ENCODE measurements at regions of chr4 and their contacts with region 1.

Region 1: GRCh38 chr4:123350191-123350544 is 46.4 kb upstream of the SPRY1 start:
- DNase-seq: peak in 1 of 2 experiments; percentile 40
- H3K4me3 ChIP-seq: no peak overlapping the region
- H3K27ac ChIP-seq: no peak overlapping the region
- H3K4me1 ChIP-seq: no peaks in the 10 kb centered on the region
- H3K27me3 ChIP-seq: no peaks in the 10 kb centered on the region
- CTCF ChIP-seq: peak; percentile 44; the same call in 1 of the 2 replicates

Region 2: DNA sequence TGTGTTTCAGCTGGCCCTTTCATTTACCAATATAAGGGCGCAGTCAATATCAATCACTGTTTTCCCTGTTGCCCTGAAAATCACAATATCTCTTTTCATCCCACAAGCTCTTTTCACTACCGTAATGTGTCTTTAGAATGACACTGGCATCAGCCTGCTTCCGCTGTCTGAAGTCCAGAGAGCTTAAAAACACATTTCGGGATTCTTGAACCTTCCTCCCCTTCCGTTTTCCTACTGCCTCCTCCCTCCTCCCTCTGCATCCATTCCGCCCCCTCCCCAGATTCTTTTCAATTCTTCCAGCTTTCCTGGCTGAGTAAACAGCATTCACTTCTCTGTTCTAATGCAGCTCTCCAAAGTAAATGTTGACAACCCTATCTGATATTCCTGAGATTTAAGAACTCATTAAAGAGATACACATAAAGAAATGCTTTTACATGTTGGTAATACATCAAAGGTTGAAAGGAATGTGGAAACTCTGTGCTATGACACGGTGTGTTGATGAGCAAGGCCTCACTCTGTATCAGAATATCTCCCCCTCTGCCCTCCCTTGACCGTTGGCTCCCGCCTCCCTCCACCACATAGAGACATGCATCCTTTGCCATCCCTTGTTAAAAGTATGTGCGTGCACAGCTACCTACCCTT is 37.1 kb before region 1 on chr4:
- CTCF ChIA-PET with region 1: no interaction called
- POLR2A ChIA-PET with region 1: no interaction called
- intact Hi-C with region 1: no loop called
- DNase-seq: no peak
- H3K4me3 ChIP-seq: no peak overlapping the region
- H3K27ac ChIP-seq: no peak overlapping the region
- H3K4me1 ChIP-seq: peaks cover 13% of the 10 kb centered on the region; the same call in 1 of the 2 replicates
- H3K27me3 ChIP-seq: no peaks in the 10 kb centered on the region
- CTCF ChIP-seq: no peak

Region 3: GRCh38 chr4:124132161-124132560 is 782.0 kb after region 1 on chr4:
- CTCF ChIA-PET with region 1: interaction called, 12 read pairs
- POLR2A ChIA-PET with region 1: no interaction called
- intact Hi-C with region 1: no loop called
- DNase-seq: no peak
- H3K4me3 ChIP-seq: no peak overlapping the region
- H3K27ac ChIP-seq: no peak overlapping the region
- H3K4me1 ChIP-seq: no peaks in the 10 kb centered on the region
- H3K27me3 ChIP-seq: no peaks in the 10 kb centered on the region
- CTCF ChIP-seq: no peak

Region 4: GRCh38 chr4:124722071-124722470 is 1371.9 kb after region 1 on chr4:
- CTCF ChIA-PET with region 1: no interaction called
- POLR2A ChIA-PET with region 1: no interaction called
- intact Hi-C with region 1: no loop called
- DNase-seq: no peak
- H3K4me3 ChIP-seq: no peak overlapping the region
- H3K27ac ChIP-seq: no peak overlapping the region
- H3K4me1 ChIP-seq: no peaks in the 10 kb centered on the region
- H3K27me3 ChIP-seq: no peaks in the 10 kb centered on the region
- CTCF ChIP-seq: no peak

Measured in PC-9 (cell line).